ENCODE measurements at regions of chr4 and their contacts with region 1.

Region 1: DNA sequence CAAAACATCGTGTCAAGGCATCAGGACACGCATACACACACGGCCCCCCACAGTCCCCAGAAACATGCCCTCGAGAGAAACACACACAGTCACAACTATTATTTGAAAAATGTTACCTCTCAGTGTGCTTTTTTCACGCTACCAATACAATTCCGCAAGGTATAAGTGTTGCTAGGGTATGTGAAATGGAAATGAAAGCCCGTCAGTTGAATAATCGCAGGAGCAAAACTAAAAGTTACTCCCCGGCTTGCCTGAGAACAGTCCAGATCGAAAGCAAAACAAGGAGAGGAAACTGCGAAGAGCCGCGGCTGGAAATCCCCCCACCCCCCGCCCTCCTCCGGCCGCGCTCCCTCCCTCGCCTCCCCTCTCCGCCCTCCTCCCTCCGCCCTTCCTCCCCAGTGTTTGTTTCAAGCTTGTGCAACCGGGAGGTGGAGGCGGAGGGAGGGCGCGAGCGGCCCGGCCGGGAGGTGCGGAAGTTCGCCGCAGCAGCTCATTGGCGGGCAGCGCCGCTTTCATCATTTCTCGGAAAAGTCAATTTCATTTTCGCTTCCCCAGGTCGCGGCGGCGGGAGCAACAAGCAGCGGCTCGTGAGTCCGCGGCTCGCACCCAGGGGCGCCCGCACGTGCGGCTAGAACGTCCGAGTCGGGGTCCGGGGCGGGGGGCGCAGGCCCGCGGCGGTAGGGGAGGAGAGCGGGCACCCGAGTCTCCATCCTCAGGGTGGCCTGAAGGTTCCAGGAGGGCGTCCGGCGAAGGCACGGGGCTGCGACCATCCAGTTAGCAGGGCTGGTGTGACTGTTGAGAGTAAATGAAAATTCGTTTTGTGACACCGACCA is at the start of gene IRF2:
- DNase-seq: peak; percentile 92 to 99 (median 96)
- ATAC-seq: peak; percentile 81
- H3K4me3 ChIP-seq: peak within 1 kb of the TSS; percentile 99
- H3K4me3 Mint-ChIP-seq: peak within 1 kb of the TSS; percentile 98
- H3K27ac ChIP-seq: peak within 1 kb of the TSS; percentile 87 to 95
- H3K27ac Mint-ChIP-seq: peak within 1 kb of the TSS; percentile 98
- H3K4me1 ChIP-seq: peaks cover 51% of the 10 kb centered on the region
- H3K4me1 Mint-ChIP-seq: peaks cover 65% of the 10 kb centered on the region
- H3K27me3 ChIP-seq: no peaks in the 10 kb centered on the region
- H3K27me3 Mint-ChIP-seq: no peaks in the 10 kb centered on the region
- CTCF ChIP-seq: no peak
- total RNA-seq, gene IRF2: 11.4 to 14.9 TPM

Region 2: GRCh38 chr4:183960046-183960420 is 514.4 kb before region 1 on chr4:
- CTCF ChIA-PET with region 1: no interaction called
- POLR2A ChIA-PET with region 1: no interaction called
- intact Hi-C with region 1: no loop called
- DNase-seq: no peak
- ATAC-seq: no peak
- H3K4me3 ChIP-seq: no peak overlapping the region
- H3K4me3 Mint-ChIP-seq: no peak overlapping the region
- H3K27ac ChIP-seq: no peak overlapping the region
- H3K27ac Mint-ChIP-seq: no peak overlapping the region
- H3K4me1 ChIP-seq: no peaks in the 10 kb centered on the region
- H3K4me1 Mint-ChIP-seq: no peaks in the 10 kb centered on the region
- H3K27me3 ChIP-seq: peaks cover 7 to 10% of the 10 kb centered on the region in 2 experiments
- H3K27me3 Mint-ChIP-seq: peaks cover 6% of the 10 kb centered on the region
- CTCF ChIP-seq: no peak

Region 3: DNA sequence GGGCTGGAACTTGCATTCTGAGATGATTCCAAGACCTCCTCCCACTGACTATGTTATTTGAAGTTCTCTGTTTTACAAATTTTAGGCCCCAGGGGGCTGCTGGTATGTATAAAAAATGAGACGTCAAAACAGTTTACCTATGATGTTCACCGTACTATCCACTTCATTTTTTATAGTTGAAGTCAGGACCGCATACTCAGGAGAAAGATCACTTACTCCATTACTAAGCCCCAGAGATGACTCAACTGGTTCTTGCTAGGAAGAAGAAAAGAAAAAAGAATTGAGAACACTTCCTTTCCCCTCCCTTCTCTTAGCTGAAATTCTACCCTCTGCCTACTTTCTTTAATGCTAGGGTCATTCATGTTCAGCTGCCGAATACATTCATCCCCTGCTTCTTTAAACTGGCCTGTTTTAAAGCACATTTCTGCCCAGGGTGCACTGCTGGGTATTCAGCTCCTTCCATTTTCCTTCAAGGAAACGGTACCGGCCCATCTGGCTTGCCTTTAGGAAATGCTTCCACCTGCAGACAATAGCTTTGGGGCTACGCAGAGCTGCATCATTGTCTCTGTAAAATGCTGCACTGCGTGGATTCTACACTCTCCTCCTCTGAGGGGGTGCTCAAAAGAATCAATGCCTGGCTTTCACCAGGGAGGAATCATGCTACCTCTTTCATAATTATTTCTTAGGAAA is 66.3 kb before region 1 on chr4:
- CTCF ChIA-PET with region 1: no interaction called
- POLR2A ChIA-PET with region 1: interaction called, 17 read pairs
- intact Hi-C with region 1: no loop called
- DNase-seq: no peak
- ATAC-seq: no peak
- H3K4me3 ChIP-seq: no peak overlapping the region
- H3K4me3 Mint-ChIP-seq: no peak overlapping the region
- H3K27ac ChIP-seq: peak overlapping the region in 1 of 2 donors; percentile 26
- H3K27ac Mint-ChIP-seq: no peak overlapping the region
- H3K4me1 ChIP-seq: peaks cover 30% of the 10 kb centered on the region
- H3K4me1 Mint-ChIP-seq: peaks cover 45% of the 10 kb centered on the region
- H3K27me3 ChIP-seq: no peaks in the 10 kb centered on the region
- H3K27me3 Mint-ChIP-seq: no peaks in the 10 kb centered on the region
- CTCF ChIP-seq: no peak

Region 4: DNA sequence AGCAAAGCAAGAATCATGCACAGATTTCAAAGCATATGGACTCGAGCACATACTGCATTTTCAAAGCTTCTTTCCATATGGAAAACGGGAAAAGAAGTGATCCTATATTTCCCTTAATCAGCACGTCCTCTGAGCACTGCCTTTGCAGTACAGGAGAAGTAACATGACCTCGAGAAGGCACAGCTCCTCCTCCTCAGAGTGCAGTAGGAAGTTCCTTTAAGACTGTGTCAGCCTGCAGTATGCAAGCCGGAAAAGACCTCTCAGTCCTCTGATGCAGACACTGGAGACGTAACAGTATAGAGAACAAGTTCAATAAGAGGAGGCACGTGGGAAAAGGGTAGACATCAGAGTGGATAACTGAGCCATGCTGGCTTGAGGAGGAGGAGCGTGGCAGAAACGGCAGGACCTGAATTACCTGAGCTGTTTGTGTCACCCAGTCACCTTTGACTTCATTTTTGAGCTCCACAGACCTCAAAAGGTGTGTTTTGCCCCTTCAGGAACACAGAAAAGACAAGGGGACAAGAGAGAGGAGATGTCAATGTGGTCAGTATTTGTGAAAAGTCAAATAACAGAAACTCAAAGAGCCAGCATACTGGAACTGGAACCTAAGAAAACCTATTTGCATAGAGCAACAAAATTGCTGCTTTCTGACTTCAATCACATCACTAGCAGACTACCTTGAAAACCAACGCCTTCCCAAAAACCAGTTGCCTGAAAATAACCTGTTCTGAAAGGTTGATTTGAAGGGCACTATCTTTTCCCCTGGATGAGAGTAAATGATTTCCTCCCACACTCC is 20.9 kb before region 1 on chr4:
- CTCF ChIA-PET with region 1: no interaction called
- POLR2A ChIA-PET with region 1: interaction called, 12 read pairs
- intact Hi-C with region 1: loop called in 1 of 2 experiments (anchors 1 kb)
- DNase-seq: peak in 12 of 14 experiments; percentile 8 to 79 (median 38)
- ATAC-seq: peak; percentile 99
- H3K4me3 ChIP-seq: no peak overlapping the region
- H3K4me3 Mint-ChIP-seq: peak overlapping the region; percentile 32
- H3K27ac ChIP-seq: peak overlapping the region; percentile 65 to 74
- H3K27ac Mint-ChIP-seq: peak overlapping the region; percentile 86
- H3K4me1 ChIP-seq: peaks cover 52% of the 10 kb centered on the region
- H3K4me1 Mint-ChIP-seq: peaks cover 82% of the 10 kb centered on the region
- H3K27me3 ChIP-seq: no peaks in the 10 kb centered on the region
- H3K27me3 Mint-ChIP-seq: no peaks in the 10 kb centered on the region
- CTCF ChIP-seq: no peak

Region 5: DNA sequence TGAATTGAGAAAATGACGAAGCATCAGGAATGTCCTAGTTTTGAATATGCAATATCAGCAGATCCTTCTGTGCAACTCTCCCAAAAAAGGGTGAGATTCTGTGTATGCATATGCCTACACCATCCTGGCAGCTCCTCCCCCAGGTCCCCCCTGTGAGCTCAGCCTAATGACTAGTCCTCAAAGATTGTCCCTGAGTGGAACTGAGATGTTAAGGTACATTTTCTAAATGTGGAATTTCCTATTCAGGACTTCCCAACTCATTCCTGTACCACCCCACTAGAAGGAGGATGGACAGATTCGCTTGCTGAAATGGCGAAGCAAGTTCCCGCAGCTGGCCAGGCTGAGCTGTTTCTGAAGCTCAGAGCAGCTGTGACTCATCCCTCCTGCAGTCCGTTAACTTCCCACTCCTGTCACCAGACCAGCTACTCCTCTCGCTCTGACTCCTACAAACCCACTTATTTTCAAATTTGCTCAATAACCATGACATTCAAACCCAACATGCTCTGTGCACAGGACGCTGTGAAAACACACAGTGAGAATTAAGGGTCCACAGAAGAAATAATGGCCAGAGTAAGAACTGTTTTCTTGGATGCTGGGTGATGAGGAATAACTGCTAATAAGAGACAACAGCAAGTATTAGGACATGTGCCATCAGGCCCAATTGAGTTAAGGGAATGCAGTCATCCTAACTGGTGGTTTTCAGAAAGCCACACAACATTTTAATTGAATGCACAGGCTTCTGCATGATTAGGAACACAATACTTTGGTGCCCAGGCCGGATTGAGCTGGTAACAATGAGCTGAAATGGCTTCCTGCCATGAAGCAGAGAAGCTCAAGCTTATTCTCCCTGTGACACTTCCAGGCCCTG is 39.9 kb after region 1 on chr4:
- CTCF ChIA-PET with region 1: no interaction called
- POLR2A ChIA-PET with region 1: interaction called, 17 read pairs
- intact Hi-C with region 1: no loop called
- DNase-seq: peak in 4 of 14 experiments; percentile 13 to 72 (median 56)
- ATAC-seq: peak; percentile 37
- H3K4me3 ChIP-seq: no peak overlapping the region
- H3K4me3 Mint-ChIP-seq: no peak overlapping the region
- H3K27ac ChIP-seq: no peak overlapping the region
- H3K27ac Mint-ChIP-seq: no peak overlapping the region
- H3K4me1 ChIP-seq: peaks cover 16% of the 10 kb centered on the region
- H3K4me1 Mint-ChIP-seq: peaks cover 24% of the 10 kb centered on the region
- H3K27me3 ChIP-seq: no peaks in the 10 kb centered on the region
- H3K27me3 Mint-ChIP-seq: no peaks in the 10 kb centered on the region
- CTCF ChIP-seq: no peak

Region 6: DNA sequence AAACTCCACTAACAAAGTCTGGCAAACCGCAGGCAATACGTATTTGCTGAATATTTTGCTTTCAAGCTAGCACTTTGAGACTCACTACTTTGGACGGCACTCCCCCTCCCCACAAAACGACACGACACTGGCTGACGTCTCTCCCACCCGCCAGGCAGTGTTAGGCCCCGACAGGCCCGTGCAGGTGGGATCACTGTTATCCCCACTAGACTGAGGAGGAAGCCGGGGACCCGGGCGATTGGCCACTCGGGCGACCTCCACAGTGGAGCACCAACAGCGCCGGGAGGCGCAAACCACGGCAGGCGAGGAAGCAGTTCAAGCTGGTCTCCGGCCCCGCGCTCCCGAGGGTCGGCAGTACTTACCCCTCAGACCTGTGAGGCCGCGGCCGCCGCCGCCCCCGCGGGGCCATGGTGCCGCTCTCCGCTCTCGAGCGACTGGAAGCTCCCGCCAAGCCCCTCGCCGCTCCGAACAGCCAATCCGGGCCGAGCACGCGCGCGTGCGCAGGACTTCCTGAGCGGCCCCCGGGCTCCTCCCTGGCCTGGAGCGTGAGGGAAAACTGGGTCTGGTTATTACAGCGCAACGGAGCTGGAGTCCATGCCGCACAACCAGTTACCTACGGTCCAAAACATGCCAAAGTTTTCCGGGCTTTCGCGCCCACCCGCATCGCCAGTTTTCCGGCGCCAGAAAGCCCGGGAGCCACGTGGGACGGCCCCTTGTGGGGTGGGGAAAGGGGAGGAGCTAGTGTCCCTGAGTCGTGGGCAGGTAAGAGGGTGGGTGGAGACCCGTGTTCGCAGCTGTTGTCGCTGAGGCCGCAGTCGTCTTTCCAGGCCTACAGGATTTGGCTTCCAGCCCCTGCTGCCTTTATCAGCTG is 259.4 kb after region 1 on chr4 and contains the start of gene CENPU:
- CTCF ChIA-PET with region 1: no interaction called
- POLR2A ChIA-PET with region 1: interaction called, 18 read pairs
- intact Hi-C with region 1: loop called (anchors 5 to 10 kb)
- DNase-seq: peak; percentile 91 to 98 (median 93)
- ATAC-seq: peak; percentile 97
- H3K4me3 ChIP-seq: peak within 1 kb of the TSS; percentile 87
- H3K4me3 Mint-ChIP-seq: peak within 1 kb of the TSS; percentile 93
- H3K27ac ChIP-seq: no peak within 1 kb of the TSS
- H3K27ac Mint-ChIP-seq: peak within 1 kb of the TSS; percentile 74
- H3K4me1 ChIP-seq: peaks cover 13% of the 10 kb centered on the region
- H3K4me1 Mint-ChIP-seq: peaks cover 17% of the 10 kb centered on the region
- H3K27me3 ChIP-seq: no peaks in the 10 kb centered on the region
- H3K27me3 Mint-ChIP-seq: no peaks in the 10 kb centered on the region
- CTCF ChIP-seq: no peak
- total RNA-seq, gene CENPU: 1.9 to 2.8 TPM

Region 7: GRCh38 chr4:185209031-185209851 is 734.8 kb after region 1 on chr4 and contains the start of gene SNX25:
- CTCF ChIA-PET with region 1: no interaction called
- POLR2A ChIA-PET with region 1: no interaction called
- intact Hi-C with region 1: loop called in 1 of 2 experiments (anchors 5 kb)
- DNase-seq: peak; percentile 67 to 93 (median 80)
- ATAC-seq: peak; percentile 89
- H3K4me3 ChIP-seq: peak within 1 kb of the TSS; percentile 69
- H3K4me3 Mint-ChIP-seq: peak within 1 kb of the TSS; percentile 97
- H3K27ac ChIP-seq: no peak within 1 kb of the TSS
- H3K27ac Mint-ChIP-seq: peak within 1 kb of the TSS; percentile 89
- H3K4me1 ChIP-seq: peaks cover 35% of the 10 kb centered on the region
- H3K4me1 Mint-ChIP-seq: peaks cover 48% of the 10 kb centered on the region
- H3K27me3 ChIP-seq: no peaks in the 10 kb centered on the region
- H3K27me3 Mint-ChIP-seq: no peaks in the 10 kb centered on the region
- CTCF ChIP-seq: no peak
- total RNA-seq, gene SNX25: 7.9 to 9.1 TPM